CD8-positive, alpha-beta T cell (primary cell): ENCODE measurements at regions of chr19 and their contacts with region 1.

Region 1: DNA sequence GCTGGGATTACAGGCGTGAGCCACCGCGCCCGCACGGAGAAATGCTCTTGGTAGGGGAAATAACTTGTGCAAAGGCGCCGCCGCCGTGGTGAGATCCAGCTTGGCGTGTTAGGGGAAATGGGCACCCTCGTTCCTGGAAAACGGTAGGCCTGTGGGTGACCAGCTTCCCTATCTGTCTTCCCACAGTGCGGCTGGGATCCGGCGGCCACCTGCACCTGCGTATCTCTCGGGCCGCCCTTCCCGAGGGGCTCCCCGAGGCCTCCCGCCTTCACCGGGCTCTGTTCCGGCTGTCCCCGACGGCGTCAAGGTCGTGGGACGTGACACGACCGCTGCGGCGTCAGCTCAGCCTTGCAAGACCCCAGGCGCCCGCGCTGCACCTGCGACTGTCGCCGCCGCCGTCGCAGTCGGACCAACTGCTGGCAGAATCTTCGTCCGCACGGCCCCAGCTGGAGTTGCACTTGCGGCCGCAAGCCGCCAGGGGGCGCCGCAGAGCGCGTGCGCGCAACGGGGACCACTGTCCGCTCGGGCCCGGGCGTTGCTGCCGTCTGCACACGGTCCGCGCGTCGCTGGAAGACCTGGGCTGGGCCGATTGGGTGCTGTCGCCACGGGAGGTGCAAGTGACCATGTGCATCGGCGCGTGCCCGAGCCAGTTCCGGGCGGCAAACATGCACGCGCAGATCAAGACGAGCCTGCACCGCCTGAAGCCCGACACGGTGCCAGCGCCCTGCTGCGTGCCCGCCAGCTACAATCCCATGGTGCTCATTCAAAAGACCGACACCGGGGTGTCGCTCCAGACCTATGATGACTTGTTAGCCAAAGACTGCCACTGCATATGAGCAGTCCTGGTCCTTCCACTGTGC is 2.4 kb downstream of the GDF15 start:
- DNase-seq: peak; percentile 58 to 89 (median 76)
- ATAC-seq: peak; percentile 93
- H3K4me3 ChIP-seq: peak overlapping the region; percentile 38 to 43
- H3K4me3 Mint-ChIP-seq: peak overlapping the region; percentile 77
- H3K27ac ChIP-seq: no peak overlapping the region
- H3K27ac Mint-ChIP-seq: no peak overlapping the region
- H3K4me1 ChIP-seq: peaks cover 8% of the 10 kb centered on the region
- H3K4me1 Mint-ChIP-seq: peaks cover 8% of the 10 kb centered on the region
- H3K27me3 ChIP-seq: peaks cover 20 to 21% of the 10 kb centered on the region in 2 experiments
- H3K27me3 Mint-ChIP-seq: peaks cover 24% of the 10 kb centered on the region
- CTCF ChIP-seq: peak; percentile 99

Region 2: GRCh38 chr19:17599780-17600179 is 788.5 kb before region 1 on chr19:
- CTCF ChIA-PET with region 1: no interaction called
- POLR2A ChIA-PET with region 1: no interaction called
- intact Hi-C with region 1: no loop called
- DNase-seq: no peak
- ATAC-seq: no peak
- H3K4me3 ChIP-seq: no peak overlapping the region
- H3K4me3 Mint-ChIP-seq: no peak overlapping the region
- H3K27ac ChIP-seq: no peak overlapping the region
- H3K27ac Mint-ChIP-seq: no peak overlapping the region
- H3K4me1 ChIP-seq: no peaks in the 10 kb centered on the region
- H3K4me1 Mint-ChIP-seq: no peaks in the 10 kb centered on the region
- H3K27me3 ChIP-seq: peaks cover 6 to 7% of the 10 kb centered on the region in 2 experiments
- H3K27me3 Mint-ChIP-seq: peaks cover 42% of the 10 kb centered on the region
- CTCF ChIP-seq: no peak

Region 3: GRCh38 chr19:17985037-17985818 is 403.1 kb before region 1 on chr19:
- CTCF ChIA-PET with region 1: no interaction called
- POLR2A ChIA-PET with region 1: no interaction called
- intact Hi-C with region 1: no loop called
- DNase-seq: no peak
- ATAC-seq: no peak
- H3K4me3 ChIP-seq: no peak overlapping the region
- H3K4me3 Mint-ChIP-seq: no peak overlapping the region
- H3K27ac ChIP-seq: no peak overlapping the region
- H3K27ac Mint-ChIP-seq: no peak overlapping the region
- H3K4me1 ChIP-seq: no peaks in the 10 kb centered on the region
- H3K4me1 Mint-ChIP-seq: no peaks in the 10 kb centered on the region
- H3K27me3 ChIP-seq: no peaks in the 10 kb centered on the region
- H3K27me3 Mint-ChIP-seq: peaks cover 16% of the 10 kb centered on the region
- CTCF ChIP-seq: no peak

Region 4: GRCh38 chr19:18373892-18374629 is 14.3 kb before region 1 on chr19:
- CTCF ChIA-PET with region 1: interaction called, 15 read pairs
- POLR2A ChIA-PET with region 1: no interaction called
- intact Hi-C with region 1: no loop called
- DNase-seq: peak in 8 of 9 experiments; percentile 23 to 74 (median 54)
- ATAC-seq: peak; percentile 40
- H3K4me3 ChIP-seq: no peak overlapping the region
- H3K4me3 Mint-ChIP-seq: no peak overlapping the region
- H3K27ac ChIP-seq: peak overlapping the region in 1 of 2 experiments; percentile 61
- H3K27ac Mint-ChIP-seq: no peak overlapping the region
- H3K4me1 ChIP-seq: peaks cover 10% of the 10 kb centered on the region
- H3K4me1 Mint-ChIP-seq: peaks cover 8% of the 10 kb centered on the region
- H3K27me3 ChIP-seq: no peaks in the 10 kb centered on the region
- H3K27me3 Mint-ChIP-seq: peaks cover 2% of the 10 kb centered on the region
- CTCF ChIP-seq: no peak

Region 5: GRCh38 chr19:18408053-18408476 is 19.7 kb after region 1 on chr19:
- CTCF ChIA-PET with region 1: interaction called, 160 read pairs
- POLR2A ChIA-PET with region 1: interaction called, 3 read pairs
- intact Hi-C with region 1: loop called (anchors 1 kb)
- DNase-seq: peak in 2 of 9 experiments; percentile 33 to 40
- ATAC-seq: no peak
- H3K4me3 ChIP-seq: no peak overlapping the region
- H3K4me3 Mint-ChIP-seq: no peak overlapping the region
- H3K27ac ChIP-seq: no peak overlapping the region
- H3K27ac Mint-ChIP-seq: no peak overlapping the region
- H3K4me1 ChIP-seq: no peaks in the 10 kb centered on the region
- H3K4me1 Mint-ChIP-seq: peaks cover 2% of the 10 kb centered on the region
- H3K27me3 ChIP-seq: no peaks in the 10 kb centered on the region
- H3K27me3 Mint-ChIP-seq: peaks cover 2% of the 10 kb centered on the region
- CTCF ChIP-seq: peak; percentile 20

Region 6: GRCh38 chr19:18419195-18419698 is 30.9 kb after region 1 on chr19 and contains the start of gene SSBP4:
- CTCF ChIA-PET with region 1: interaction called, 160 read pairs
- POLR2A ChIA-PET with region 1: interaction called, 8 read pairs
- intact Hi-C with region 1: no loop called
- DNase-seq: peak; percentile 43 to 87 (median 61)
- ATAC-seq: peak; percentile 50
- H3K4me3 ChIP-seq: peak within 1 kb of the TSS; percentile 55 to 74
- H3K4me3 Mint-ChIP-seq: peak within 1 kb of the TSS; percentile 84
- H3K27ac ChIP-seq: peak within 1 kb of the TSS in 1 of 2 experiments; percentile 74
- H3K27ac Mint-ChIP-seq: peak within 1 kb of the TSS; percentile 91
- H3K4me1 ChIP-seq: peaks cover 87% of the 10 kb centered on the region
- H3K4me1 Mint-ChIP-seq: peaks cover 77% of the 10 kb centered on the region
- H3K27me3 ChIP-seq: peaks cover 0 to 7% of the 10 kb centered on the region in 2 experiments
- H3K27me3 Mint-ChIP-seq: peaks cover 14% of the 10 kb centered on the region
- CTCF ChIP-seq: no peak
- total RNA-seq, gene SSBP4: 49.9 to 58.2 TPM